ENCODE measurements at regions of chr14 and their contacts with region 1.

Region 1: DNA sequence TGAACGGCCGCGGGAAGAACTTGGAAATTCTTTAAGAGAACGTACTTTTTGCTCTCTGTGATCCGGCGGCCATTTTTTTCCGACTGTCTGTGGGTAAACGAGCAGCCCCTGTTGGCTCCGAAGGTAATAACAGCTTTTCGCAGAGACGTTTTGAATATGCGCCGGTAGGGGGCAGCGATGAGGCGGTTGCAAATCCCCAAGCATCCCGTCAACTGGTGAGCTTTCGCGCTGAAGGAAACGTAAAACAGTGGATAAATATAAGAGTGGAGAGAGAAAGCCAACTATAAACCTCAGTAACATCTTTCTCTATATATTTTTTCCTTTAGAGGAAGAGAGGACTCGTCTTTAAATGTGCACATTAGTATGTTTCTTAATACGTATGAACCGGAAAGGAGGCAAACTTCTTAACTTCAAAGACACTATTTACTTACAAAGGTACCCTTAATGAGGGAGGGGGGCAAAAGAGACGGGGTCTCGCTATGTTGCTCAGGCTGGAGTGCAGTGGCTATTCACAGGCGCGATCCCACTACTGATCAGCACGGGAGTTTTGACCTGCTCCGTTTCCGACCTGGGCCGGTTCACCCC is 9.6 kb upstream of the NEMF start:
- DNase-seq: peak; percentile 56 to 93
- ATAC-seq: peak; percentile 50 to 71
- H3K4me3 ChIP-seq: peak overlapping the region; percentile 59
- H3K27ac ChIP-seq: peak overlapping the region; percentile 88 to 96
- H3K4me1 ChIP-seq: peaks cover 20% of the 10 kb centered on the region
- CTCF ChIP-seq: peak; percentile 100
- EP300 ChIP-seq: no peak
- POLR2A ChIP-seq: no peak
- RAD21 ChIP-seq: peak; percentile 51 to 53

Region 2: DNA sequence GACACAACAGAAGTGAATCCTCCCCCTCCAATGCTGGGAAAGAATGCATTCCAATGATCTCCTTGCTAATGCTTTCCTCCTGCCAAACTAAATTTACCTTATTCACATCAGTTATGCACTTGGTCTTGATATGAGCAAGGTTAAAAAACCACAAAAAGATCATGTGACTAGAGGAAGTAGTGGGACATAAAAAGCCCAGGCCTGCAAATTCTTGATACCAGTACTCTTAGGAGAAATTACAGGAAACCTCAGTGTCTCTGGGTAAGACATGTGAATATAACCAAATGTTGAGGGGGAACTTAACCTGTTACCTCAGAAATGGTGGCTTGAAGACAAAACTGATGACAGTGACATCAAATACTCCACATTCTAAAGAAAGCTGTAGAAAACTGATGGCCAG is 703.1 kb before region 1 on chr14:
- CTCF ChIA-PET with region 1: no interaction called
- POLR2A ChIA-PET with region 1: no interaction called
- DNase-seq: no peak
- ATAC-seq: no peak
- H3K4me3 ChIP-seq: no peak overlapping the region
- H3K27ac ChIP-seq: no peak overlapping the region
- H3K4me1 ChIP-seq: no peaks in the 10 kb centered on the region
- CTCF ChIP-seq: no peak
- EP300 ChIP-seq: no peak
- POLR2A ChIP-seq: no peak
- RAD21 ChIP-seq: no peak

Region 3: GRCh38 chr14:49796025-49796424 is 66.2 kb before region 1 on chr14:
- CTCF ChIA-PET with region 1: no interaction called
- POLR2A ChIA-PET with region 1: no interaction called
- DNase-seq: no peak
- ATAC-seq: no peak
- H3K4me3 ChIP-seq: no peak overlapping the region
- H3K27ac ChIP-seq: no peak overlapping the region
- H3K4me1 ChIP-seq: no peaks in the 10 kb centered on the region
- CTCF ChIP-seq: no peak
- EP300 ChIP-seq: no peak
- POLR2A ChIP-seq: no peak
- RAD21 ChIP-seq: no peak

Region 4: GRCh38 chr14:49892636-49893308 is 30.6 kb after region 1 on chr14 and contains the start of gene ARF6:
- CTCF ChIA-PET with region 1: interaction called, 29 read pairs
- POLR2A ChIA-PET with region 1: interaction called, 21 read pairs
- DNase-seq: peak; percentile 87 to 98
- ATAC-seq: peak; percentile 94 to 95
- H3K4me3 ChIP-seq: peak within 1 kb of the TSS; percentile 67
- H3K27ac ChIP-seq: peak within 1 kb of the TSS; percentile 96 to 98
- H3K4me1 ChIP-seq: peaks cover 21% of the 10 kb centered on the region
- CTCF ChIP-seq: 0 out of 3 replicates have a peak, but pooled peaks have one; percentile 12
- EP300 ChIP-seq: no peak
- POLR2A ChIP-seq: peak; percentile 78
- RAD21 ChIP-seq: peak; percentile 18 to 46; a peak in 4 of 5 replicates
- polyA plus RNA-seq, gene ARF6: 29.8 and 33.3 TPM in 2 replicates

Region 5: DNA sequence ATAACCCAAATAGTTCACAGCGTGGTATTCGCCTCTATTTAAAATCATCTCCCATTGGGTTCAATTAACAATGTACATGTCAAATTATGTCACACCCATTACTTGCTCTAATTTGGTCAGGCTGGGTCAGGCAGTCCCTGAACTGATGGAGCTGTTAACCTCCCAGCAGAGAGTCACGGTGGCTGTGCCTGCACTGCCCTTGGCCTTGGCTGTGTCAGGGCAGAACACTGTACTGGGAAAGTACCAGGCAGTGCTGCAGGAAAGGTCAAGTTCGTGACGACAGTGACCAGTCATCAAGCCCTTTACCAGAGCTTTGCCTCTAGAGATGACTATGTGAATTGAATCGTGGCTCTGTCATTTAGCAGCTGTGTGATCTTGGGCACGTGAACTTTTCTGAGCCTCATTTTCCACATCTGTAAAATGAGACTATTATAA is 130.7 kb after region 1 on chr14:
- CTCF ChIA-PET with region 1: interaction called, 16 read pairs
- POLR2A ChIA-PET with region 1: interaction called, 4 read pairs
- DNase-seq: peak in 1 of 2 experiments; percentile 88
- ATAC-seq: peak; percentile 90 to 94
- H3K4me3 ChIP-seq: no peak overlapping the region
- H3K27ac ChIP-seq: peak overlapping the region; percentile 69 to 80
- H3K4me1 ChIP-seq: peaks cover 52% of the 10 kb centered on the region
- CTCF ChIP-seq: no peak
- EP300 ChIP-seq: 0 out of 5 replicates have a peak, but pooled peaks of 1 of the 2 experiments have one; percentile 11
- POLR2A ChIP-seq: peak; percentile 30; the same call in 1 of the 2 replicates
- RAD21 ChIP-seq: no peak; a peak in 1 of 5 replicates

Region 6: GRCh38 chr14:50008562-50009350 is 146.6 kb after region 1 on chr14:
- CTCF ChIA-PET with region 1: interaction called, 12 read pairs
- POLR2A ChIA-PET with region 1: no interaction called
- DNase-seq: peak in 1 of 2 experiments; percentile 58
- ATAC-seq: peak; percentile 68 to 78
- H3K4me3 ChIP-seq: no peak overlapping the region
- H3K27ac ChIP-seq: peak overlapping the region; percentile 65 to 74
- H3K4me1 ChIP-seq: peaks cover 29% of the 10 kb centered on the region
- CTCF ChIP-seq: no peak
- EP300 ChIP-seq: no peak
- POLR2A ChIP-seq: no peak
- RAD21 ChIP-seq: no peak

Region 7: DNA sequence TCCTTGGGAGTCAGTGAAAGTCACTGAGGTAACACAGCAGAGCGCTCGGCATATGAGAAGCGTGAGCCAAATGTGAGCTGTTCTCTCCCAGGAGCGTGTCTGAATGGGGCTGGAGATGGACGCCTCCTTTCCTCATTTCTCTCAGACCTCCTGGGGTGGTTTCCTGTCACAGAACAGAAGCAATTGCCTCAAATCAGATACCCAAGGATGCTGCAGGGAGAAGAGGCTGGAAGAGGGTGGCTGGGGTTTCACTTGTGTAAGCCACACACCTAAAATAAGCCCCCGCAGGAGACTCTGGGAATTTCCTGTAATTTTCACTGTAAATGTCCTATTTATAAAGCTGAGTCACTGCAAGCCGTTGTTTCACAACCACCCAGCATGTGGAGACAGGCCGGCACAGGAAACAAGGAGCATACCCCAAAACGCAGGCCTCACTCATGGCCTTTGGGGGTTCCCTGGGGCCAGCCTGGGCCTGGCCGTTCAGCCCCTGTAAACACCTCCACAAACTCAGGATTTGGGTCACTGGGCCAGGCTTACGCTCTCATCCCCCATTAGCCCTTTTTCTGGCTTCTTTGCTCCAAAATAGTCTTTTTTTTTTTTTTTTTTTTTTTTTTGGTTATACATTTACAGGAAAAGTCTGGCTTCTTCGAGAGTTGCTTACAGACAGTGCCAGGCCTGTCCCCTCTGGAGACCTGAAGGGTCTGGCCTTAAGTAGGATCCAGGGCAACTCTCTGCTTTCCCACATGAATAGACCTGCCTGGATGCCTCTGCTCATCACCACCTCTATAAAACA is 198.9 kb after region 1 on chr14:
- CTCF ChIA-PET with region 1: interaction called, 29 read pairs
- POLR2A ChIA-PET with region 1: interaction called, 12 read pairs
- DNase-seq: peak; percentile 86 to 89
- ATAC-seq: peak; percentile 88 to 89
- H3K4me3 ChIP-seq: no peak overlapping the region
- H3K27ac ChIP-seq: peak overlapping the region; percentile 90 to 95
- H3K4me1 ChIP-seq: peaks cover 39% of the 10 kb centered on the region
- CTCF ChIP-seq: no peak
- EP300 ChIP-seq: peak in 1 of 2 experiments; percentile 28; a peak in 1 of 5 replicates
- POLR2A ChIP-seq: no peak
- RAD21 ChIP-seq: peak; percentile 8 to 48; a peak in 4 of 5 replicates

Region 8: DNA sequence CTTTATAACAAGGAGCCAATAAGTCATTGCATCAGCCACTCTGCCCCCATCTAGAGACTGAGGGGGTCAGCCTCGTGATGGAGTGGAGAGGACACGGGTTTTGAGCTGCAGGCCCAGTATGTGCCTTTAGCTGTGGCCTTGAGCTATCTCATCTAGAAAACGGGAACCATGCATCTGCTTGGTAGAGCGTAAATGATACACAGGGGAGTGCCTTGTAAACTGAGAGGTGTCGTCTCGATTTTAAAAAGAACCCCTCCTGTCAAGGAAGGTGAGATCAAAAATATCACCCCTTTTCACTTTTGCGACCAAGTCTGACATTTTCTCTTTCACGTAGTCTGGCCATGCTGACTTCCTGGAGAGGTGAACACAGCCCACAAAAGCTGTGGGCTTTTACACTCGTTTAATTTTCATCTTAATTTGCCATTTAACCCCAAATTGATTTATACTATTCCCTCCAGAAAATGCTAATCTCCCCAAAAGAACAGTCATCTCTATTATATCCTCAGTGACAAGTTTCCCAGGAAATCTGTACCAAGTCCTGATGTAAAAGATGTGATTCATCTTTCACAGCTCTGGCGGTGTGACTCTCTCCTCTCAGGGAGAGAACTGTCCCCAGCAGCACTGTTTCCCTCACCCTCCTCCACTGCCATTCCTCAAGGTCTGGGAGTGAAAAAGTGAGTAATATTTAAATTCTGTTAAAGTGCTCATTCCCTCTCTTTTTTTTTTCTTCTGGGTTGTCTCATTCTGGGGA is 223.6 kb after region 1 on chr14:
- CTCF ChIA-PET with region 1: interaction called, 62 read pairs
- POLR2A ChIA-PET with region 1: no interaction called
- DNase-seq: no peak
- ATAC-seq: peak; percentile 36 to 59; a peak in 2 of 6 replicates
- H3K4me3 ChIP-seq: no peak overlapping the region
- H3K27ac ChIP-seq: no peak overlapping the region
- H3K4me1 ChIP-seq: 0 out of 3 replicates have a peak, but pooled peaks cover 7% of the 10 kb centered on the region
- CTCF ChIP-seq: no peak
- EP300 ChIP-seq: no peak
- POLR2A ChIP-seq: no peak
- RAD21 ChIP-seq: no peak

Region 9: GRCh38 chr14:50116181-50116956 is 254.2 kb after region 1 on chr14 and contains the start of gene VCPKMT:
- CTCF ChIA-PET with region 1: interaction called, 17 read pairs
- POLR2A ChIA-PET with region 1: interaction called, 19 read pairs
- DNase-seq: peak; percentile 76 to 91
- ATAC-seq: peak; percentile 99
- H3K4me3 ChIP-seq: peak within 1 kb of the TSS; percentile 71
- H3K27ac ChIP-seq: peak within 1 kb of the TSS; percentile 73 to 93
- H3K4me1 ChIP-seq: peaks cover 16% of the 10 kb centered on the region
- CTCF ChIP-seq: no peak
- EP300 ChIP-seq: no peak
- POLR2A ChIP-seq: peak; percentile 91
- RAD21 ChIP-seq: peak in 1 of 2 experiments; percentile 18; a peak in 1 of 5 replicates
- polyA plus RNA-seq, gene VCPKMT: 9.8 and 12.2 TPM in 2 replicates

Region 10: GRCh38 chr14:50198499-50198898 is 336.3 kb after region 1 on chr14:
- CTCF ChIA-PET with region 1: no interaction called
- POLR2A ChIA-PET with region 1: no interaction called
- DNase-seq: no peak
- ATAC-seq: no peak
- H3K4me3 ChIP-seq: no peak overlapping the region
- H3K27ac ChIP-seq: no peak overlapping the region
- H3K4me1 ChIP-seq: no peaks in the 10 kb centered on the region
- CTCF ChIP-seq: no peak
- EP300 ChIP-seq: no peak
- POLR2A ChIP-seq: no peak
- RAD21 ChIP-seq: no peak